A673 (cell line): ENCODE measurements at regions of chr5 and their contacts with region 1.

Region 1: GRCh38 chr5:128213340-128213739 is 129.8 kb downstream of the SLC12A2 start:
- DNase-seq: peak; percentile 71
- H3K4me3 ChIP-seq: no peak overlapping the region
- H3K27ac ChIP-seq: no peak overlapping the region
- H3K4me1 ChIP-seq: no peaks in the 10 kb centered on the region
- H3K27me3 ChIP-seq: peaks cover 2% of the 10 kb centered on the region
- CTCF ChIP-seq: peak; percentile 79

Region 2: GRCh38 chr5:127602481-127602880 is 610.9 kb before region 1 on chr5:
- CTCF ChIA-PET with region 1: no interaction called
- POLR2A ChIA-PET with region 1: no interaction called
- intact Hi-C with region 1: no loop called
- DNase-seq: no peak
- H3K4me3 ChIP-seq: no peak overlapping the region
- H3K27ac ChIP-seq: no peak overlapping the region
- H3K4me1 ChIP-seq: no peaks in the 10 kb centered on the region
- H3K27me3 ChIP-seq: peaks cover 34% of the 10 kb centered on the region
- CTCF ChIP-seq: no peak

Region 3: DNA sequence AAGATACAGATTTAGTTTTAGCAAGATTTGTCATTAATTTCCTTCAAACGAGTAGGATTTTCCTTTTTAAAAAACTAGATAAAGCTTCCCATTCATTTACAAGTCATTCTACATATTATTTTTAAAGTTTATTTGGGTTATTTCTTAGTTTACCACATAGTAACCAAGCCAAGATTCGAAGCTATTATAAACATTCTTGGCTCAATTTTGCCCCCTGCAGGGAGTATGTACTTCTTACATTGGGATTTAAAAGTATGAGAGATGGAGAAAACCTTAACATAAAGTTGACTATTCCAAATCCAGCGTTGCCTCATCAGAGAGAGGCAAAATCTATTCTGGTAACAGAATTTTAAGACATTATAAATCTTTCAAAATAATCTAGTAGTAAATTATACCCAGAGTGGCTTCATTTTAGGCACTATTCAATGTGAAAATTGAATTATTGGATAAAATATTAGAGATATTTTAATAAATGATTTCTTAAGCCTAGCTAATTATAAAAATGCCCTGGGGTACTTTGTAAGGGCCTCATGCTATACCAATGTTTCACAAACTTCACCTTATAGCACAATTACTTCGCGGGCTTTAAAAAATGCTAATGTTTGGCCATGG is 285.6 kb after region 1 on chr5:
- CTCF ChIA-PET with region 1: interaction called, 7 read pairs
- POLR2A ChIA-PET with region 1: no interaction called
- intact Hi-C with region 1: loop called (anchors 2 kb)
- DNase-seq: peak; percentile 55
- H3K4me3 ChIP-seq: no peak overlapping the region
- H3K27ac ChIP-seq: no peak overlapping the region
- H3K4me1 ChIP-seq: no peaks in the 10 kb centered on the region
- H3K27me3 ChIP-seq: no peaks in the 10 kb centered on the region
- CTCF ChIP-seq: peak; percentile 47

Region 4: GRCh38 chr5:128674825-128675446 is 461.6 kb after region 1 on chr5:
- CTCF ChIA-PET with region 1: no interaction called
- POLR2A ChIA-PET with region 1: no interaction called
- intact Hi-C with region 1: loop called (anchors 2 kb)
- DNase-seq: peak; percentile 55
- H3K4me3 ChIP-seq: no peak overlapping the region
- H3K27ac ChIP-seq: no peak overlapping the region
- H3K4me1 ChIP-seq: no peaks in the 10 kb centered on the region
- H3K27me3 ChIP-seq: no peaks in the 10 kb centered on the region
- CTCF ChIP-seq: peak; percentile 72

Region 5: DNA sequence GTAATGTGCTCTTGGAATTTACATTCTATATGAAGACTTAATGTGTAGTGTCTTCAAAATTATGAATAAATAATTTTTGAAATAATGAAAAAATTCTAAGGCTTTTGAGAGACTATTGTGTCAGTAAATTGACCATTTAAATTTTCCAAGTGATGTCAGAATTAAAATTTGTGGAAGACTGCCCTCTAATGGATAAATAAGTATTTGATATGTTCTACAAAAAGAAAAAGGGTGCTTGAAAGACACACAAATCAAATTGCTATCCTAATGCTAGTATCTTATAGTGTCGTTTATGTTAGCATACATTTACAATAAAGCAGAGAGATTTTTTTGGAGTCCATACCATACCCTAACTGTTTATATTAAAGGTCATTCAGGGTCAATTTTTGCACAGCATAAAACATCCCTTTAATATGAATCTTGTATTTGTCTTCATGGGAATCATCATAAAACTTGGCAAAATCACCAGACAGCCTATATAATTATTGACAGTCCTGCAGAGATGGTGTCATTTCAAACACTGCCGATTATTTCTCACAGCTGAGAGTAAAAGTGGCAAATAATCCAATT is 631.1 kb after region 1 on chr5:
- CTCF ChIA-PET with region 1: no interaction called
- POLR2A ChIA-PET with region 1: no interaction called
- intact Hi-C with region 1: loop called (anchors 2 kb)
- DNase-seq: peak; percentile 42
- H3K4me3 ChIP-seq: no peak overlapping the region
- H3K27ac ChIP-seq: no peak overlapping the region
- H3K4me1 ChIP-seq: no peaks in the 10 kb centered on the region
- H3K27me3 ChIP-seq: no peaks in the 10 kb centered on the region
- CTCF ChIP-seq: peak; percentile 45

Region 6: GRCh38 chr5:128905571-128906110 is 692.3 kb after region 1 on chr5:
- CTCF ChIA-PET with region 1: no interaction called
- POLR2A ChIA-PET with region 1: no interaction called
- intact Hi-C with region 1: loop called (anchors 10 kb)
- DNase-seq: peak; percentile 67
- H3K4me3 ChIP-seq: no peak overlapping the region
- H3K27ac ChIP-seq: no peak overlapping the region
- H3K4me1 ChIP-seq: no peaks in the 10 kb centered on the region
- H3K27me3 ChIP-seq: peaks cover 4% of the 10 kb centered on the region
- CTCF ChIP-seq: peak; percentile 82

Region 7: GRCh38 chr5:129135633-129136032 is 922.3 kb after region 1 on chr5:
- CTCF ChIA-PET with region 1: no interaction called
- POLR2A ChIA-PET with region 1: no interaction called
- intact Hi-C with region 1: loop called (anchors 10 kb)
- DNase-seq: no peak
- H3K4me3 ChIP-seq: no peak overlapping the region
- H3K27ac ChIP-seq: no peak overlapping the region
- H3K4me1 ChIP-seq: no peaks in the 10 kb centered on the region
- H3K27me3 ChIP-seq: no peaks in the 10 kb centered on the region
- CTCF ChIP-seq: 0 out of 2 replicates have a peak, but pooled peaks have one; percentile 14

Region 8: GRCh38 chr5:129852747-129853352 is 1639.5 kb after region 1 on chr5:
- CTCF ChIA-PET with region 1: no interaction called
- POLR2A ChIA-PET with region 1: no interaction called
- intact Hi-C with region 1: loop called (anchors 10 kb)
- DNase-seq: peak; percentile 79
- H3K4me3 ChIP-seq: no peak overlapping the region
- H3K27ac ChIP-seq: no peak overlapping the region
- H3K4me1 ChIP-seq: no peaks in the 10 kb centered on the region
- H3K27me3 ChIP-seq: no peaks in the 10 kb centered on the region
- CTCF ChIP-seq: peak; percentile 90